HepG2 (cell line): ENCODE measurements at regions of chr13 and their contacts with region 1.

Region 1: GRCh38 chr13:91647361-91647990 is 249.1 kb downstream of the GPC5 start:
- DNase-seq: peak; percentile 26
- ATAC-seq: peak; percentile 96
- H3K4me3 ChIP-seq: no peak overlapping the region
- H3K27ac ChIP-seq: no peak overlapping the region
- H3K4me1 ChIP-seq: no peaks in the 10 kb centered on the region
- H3K27me3 ChIP-seq: no peaks in the 10 kb centered on the region
- CTCF ChIP-seq: peak; percentile 69
- EP300 ChIP-seq: no peak
- POLR2A ChIP-seq: no peak
- RAD21 ChIP-seq: no peak

Region 2: DNA sequence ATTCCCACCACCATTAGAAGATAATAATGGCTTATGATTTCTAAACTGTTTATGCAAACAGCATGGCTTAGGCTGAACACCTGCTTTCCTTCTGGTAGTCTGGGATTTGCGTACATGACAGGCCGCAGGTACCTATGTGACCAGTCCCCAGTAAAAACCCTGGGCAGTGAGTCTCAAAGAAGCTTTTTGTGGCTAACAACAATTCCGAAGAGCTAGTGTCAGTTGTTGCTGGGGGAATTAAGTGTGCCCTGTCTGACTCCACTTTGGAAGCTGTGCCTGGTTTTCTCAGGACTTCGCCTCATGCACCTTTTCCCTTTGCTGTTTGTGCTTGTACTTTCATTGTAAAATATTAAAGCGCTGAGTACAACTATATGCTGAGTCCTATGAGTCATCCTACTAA is 550.2 kb before region 1 on chr13:
- CTCF ChIA-PET with region 1: no interaction called
- POLR2A ChIA-PET with region 1: no interaction called
- in situ Hi-C with region 1: no loop called
- intact Hi-C with region 1: no loop called
- DNase-seq: no peak
- ATAC-seq: no peak
- H3K4me3 ChIP-seq: no peak overlapping the region
- H3K27ac ChIP-seq: no peak overlapping the region
- H3K4me1 ChIP-seq: no peaks in the 10 kb centered on the region
- H3K27me3 ChIP-seq: no peaks in the 10 kb centered on the region
- CTCF ChIP-seq: no peak
- EP300 ChIP-seq: no peak
- POLR2A ChIP-seq: no peak
- RAD21 ChIP-seq: no peak

Region 3: GRCh38 chr13:91375116-91375729 is 272.3 kb before region 1 on chr13:
- CTCF ChIA-PET with region 1: no interaction called
- POLR2A ChIA-PET with region 1: no interaction called
- in situ Hi-C with region 1: no loop called
- intact Hi-C with region 1: loop called (anchors 2 kb)
- DNase-seq: no peak
- ATAC-seq: peak; percentile 76
- H3K4me3 ChIP-seq: no peak overlapping the region
- H3K27ac ChIP-seq: no peak overlapping the region
- H3K4me1 ChIP-seq: peaks cover 30% of the 10 kb centered on the region
- H3K27me3 ChIP-seq: no peaks in the 10 kb centered on the region
- CTCF ChIP-seq: peak; percentile 62
- EP300 ChIP-seq: no peak
- POLR2A ChIP-seq: no peak
- RAD21 ChIP-seq: 0 out of 2 replicates have a peak, but pooled peaks have one; percentile 18

Region 4: DNA sequence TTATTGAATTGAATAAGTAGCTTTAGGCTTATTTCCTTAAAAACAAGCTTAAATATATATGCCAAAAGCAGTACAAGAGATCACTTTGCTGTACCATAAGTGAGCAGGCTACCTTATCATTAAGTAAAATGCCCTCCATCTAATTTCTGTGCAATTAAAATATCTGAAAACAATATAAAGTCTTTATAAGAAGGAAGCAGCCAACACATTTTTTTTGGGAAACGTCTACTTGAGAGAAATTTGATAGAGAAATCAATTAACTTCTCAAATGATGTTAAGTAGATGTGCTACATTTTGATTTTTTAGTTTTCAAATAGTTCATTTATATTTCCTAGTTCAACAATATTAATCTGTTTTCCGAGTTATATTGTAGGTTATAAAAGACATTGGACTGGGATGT is 196.6 kb before region 1 on chr13:
- CTCF ChIA-PET with region 1: no interaction called
- POLR2A ChIA-PET with region 1: no interaction called
- in situ Hi-C with region 1: no loop called
- intact Hi-C with region 1: no loop called
- DNase-seq: no peak
- ATAC-seq: no peak
- H3K4me3 ChIP-seq: no peak overlapping the region
- H3K27ac ChIP-seq: no peak overlapping the region
- H3K4me1 ChIP-seq: no peaks in the 10 kb centered on the region
- H3K27me3 ChIP-seq: no peaks in the 10 kb centered on the region
- CTCF ChIP-seq: no peak
- EP300 ChIP-seq: no peak
- POLR2A ChIP-seq: no peak
- RAD21 ChIP-seq: no peak

Region 5: DNA sequence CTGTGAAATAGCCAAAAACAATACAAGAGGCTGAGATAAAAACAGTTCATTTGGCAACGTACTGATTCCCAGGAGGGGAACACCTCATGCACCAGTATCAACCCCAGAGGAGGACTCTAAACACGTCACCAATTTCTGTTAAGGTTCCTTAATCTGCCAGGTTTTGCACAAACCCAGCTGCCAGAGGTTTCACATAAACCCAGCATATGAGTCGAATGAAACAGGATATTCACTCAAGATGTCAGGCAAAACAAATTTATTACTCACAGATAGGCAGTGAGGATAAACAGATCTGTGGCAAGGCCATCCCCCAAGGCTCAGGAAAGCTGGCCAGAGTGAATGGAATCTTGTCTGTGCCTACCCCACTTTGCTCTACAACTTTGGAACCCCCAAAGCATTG is 38.1 kb before region 1 on chr13:
- CTCF ChIA-PET with region 1: no interaction called
- POLR2A ChIA-PET with region 1: no interaction called
- in situ Hi-C with region 1: no loop called
- intact Hi-C with region 1: no loop called
- DNase-seq: no peak
- ATAC-seq: no peak
- H3K4me3 ChIP-seq: no peak overlapping the region
- H3K27ac ChIP-seq: no peak overlapping the region
- H3K4me1 ChIP-seq: no peaks in the 10 kb centered on the region
- H3K27me3 ChIP-seq: no peaks in the 10 kb centered on the region
- CTCF ChIP-seq: no peak
- EP300 ChIP-seq: no peak
- POLR2A ChIP-seq: no peak
- RAD21 ChIP-seq: no peak

Region 6: GRCh38 chr13:91661692-91662490 is 14.4 kb after region 1 on chr13:
- CTCF ChIA-PET with region 1: no interaction called
- POLR2A ChIA-PET with region 1: no interaction called
- in situ Hi-C with region 1: no loop called
- intact Hi-C with region 1: loop called (anchors 1 kb)
- DNase-seq: no peak
- ATAC-seq: no peak
- H3K4me3 ChIP-seq: no peak overlapping the region
- H3K27ac ChIP-seq: no peak overlapping the region
- H3K4me1 ChIP-seq: no peaks in the 10 kb centered on the region
- H3K27me3 ChIP-seq: no peaks in the 10 kb centered on the region
- CTCF ChIP-seq: no peak
- EP300 ChIP-seq: no peak
- POLR2A ChIP-seq: no peak
- RAD21 ChIP-seq: no peak